BJ (cell line): ENCODE measurements at regions of chr9 and their contacts with region 1.

Region 1: GRCh38 chr9:111926421-111926875 is 29.8 kb downstream of the UGCG start:
- DNase-seq: no peak
- H3K4me3 ChIP-seq: no peak overlapping the region
- H3K27me3 ChIP-seq: no peaks in the 10 kb centered on the region
- CTCF ChIP-seq: no peak

Region 2: DNA sequence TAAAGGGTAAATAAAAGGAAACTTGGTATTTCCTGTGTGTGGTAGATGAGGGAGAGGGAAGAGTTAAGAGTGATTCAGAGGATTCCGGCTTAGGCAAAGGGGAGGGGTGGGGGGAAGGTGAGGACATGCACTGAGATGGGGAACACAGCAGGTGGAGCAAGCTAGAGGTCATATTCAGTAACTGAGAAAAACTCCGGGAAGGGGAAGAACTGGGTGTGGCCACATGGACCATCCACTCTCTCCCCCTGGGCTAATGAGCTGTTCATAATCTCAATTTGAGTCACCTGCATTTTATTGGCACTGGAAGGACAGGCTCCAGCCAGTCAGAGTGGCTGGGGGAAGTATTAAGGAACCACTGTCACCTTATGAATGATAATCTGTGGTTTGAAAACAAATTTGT is 74.9 kb before region 1 on chr9:
- CTCF ChIA-PET with region 1: no interaction called
- POLR2A ChIA-PET with region 1: interaction called, 11 read pairs
- DNase-seq: no peak
- H3K4me3 ChIP-seq: no peak overlapping the region
- H3K27me3 ChIP-seq: no peaks in the 10 kb centered on the region
- CTCF ChIP-seq: no peak

Region 3: GRCh38 chr9:111866976-111867375 is 59.5 kb before region 1 on chr9:
- CTCF ChIA-PET with region 1: no interaction called
- POLR2A ChIA-PET with region 1: interaction called, 39 read pairs
- DNase-seq: no peak
- H3K4me3 ChIP-seq: no peak overlapping the region
- H3K27me3 ChIP-seq: no peaks in the 10 kb centered on the region
- CTCF ChIP-seq: no peak

Region 4: DNA sequence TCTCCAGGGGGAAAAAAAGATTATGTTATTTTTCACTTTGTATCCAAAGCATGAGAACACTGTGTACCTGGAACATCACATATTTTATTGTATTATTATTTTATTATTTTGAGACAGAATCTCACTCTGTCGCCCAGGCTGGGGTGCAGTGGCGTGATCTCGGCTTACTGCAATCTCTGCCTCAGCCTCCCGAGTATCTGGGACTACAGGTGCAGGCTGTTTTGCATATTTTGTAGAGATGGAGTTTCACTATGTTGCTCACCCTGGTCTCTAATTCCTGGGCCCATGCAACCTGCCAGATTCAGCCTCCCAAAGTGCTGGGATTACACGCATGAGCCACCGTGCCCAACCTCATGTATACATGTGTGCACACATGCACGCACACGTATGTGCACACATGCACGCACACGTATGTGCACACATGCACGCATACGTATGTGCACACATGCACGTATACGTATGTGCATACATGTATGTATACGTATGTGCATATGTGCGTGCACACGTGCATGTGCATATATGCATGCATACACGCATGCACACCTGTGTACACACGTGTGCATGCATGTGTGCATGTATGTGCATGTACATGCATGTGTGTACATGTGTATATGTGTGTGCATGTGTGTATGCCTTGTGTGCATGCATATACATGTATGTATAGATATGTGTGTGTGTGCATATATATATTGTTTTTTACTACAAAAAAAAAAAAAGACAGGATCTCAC is 39.3 kb before region 1 on chr9:
- CTCF ChIA-PET with region 1: no interaction called
- POLR2A ChIA-PET with region 1: no interaction called
- DNase-seq: no peak
- H3K4me3 ChIP-seq: no peak overlapping the region
- H3K27me3 ChIP-seq: no peaks in the 10 kb centered on the region
- CTCF ChIP-seq: no peak